ENCODE measurements at regions of chr6 and their contacts with region 1.

Region 1: DNA sequence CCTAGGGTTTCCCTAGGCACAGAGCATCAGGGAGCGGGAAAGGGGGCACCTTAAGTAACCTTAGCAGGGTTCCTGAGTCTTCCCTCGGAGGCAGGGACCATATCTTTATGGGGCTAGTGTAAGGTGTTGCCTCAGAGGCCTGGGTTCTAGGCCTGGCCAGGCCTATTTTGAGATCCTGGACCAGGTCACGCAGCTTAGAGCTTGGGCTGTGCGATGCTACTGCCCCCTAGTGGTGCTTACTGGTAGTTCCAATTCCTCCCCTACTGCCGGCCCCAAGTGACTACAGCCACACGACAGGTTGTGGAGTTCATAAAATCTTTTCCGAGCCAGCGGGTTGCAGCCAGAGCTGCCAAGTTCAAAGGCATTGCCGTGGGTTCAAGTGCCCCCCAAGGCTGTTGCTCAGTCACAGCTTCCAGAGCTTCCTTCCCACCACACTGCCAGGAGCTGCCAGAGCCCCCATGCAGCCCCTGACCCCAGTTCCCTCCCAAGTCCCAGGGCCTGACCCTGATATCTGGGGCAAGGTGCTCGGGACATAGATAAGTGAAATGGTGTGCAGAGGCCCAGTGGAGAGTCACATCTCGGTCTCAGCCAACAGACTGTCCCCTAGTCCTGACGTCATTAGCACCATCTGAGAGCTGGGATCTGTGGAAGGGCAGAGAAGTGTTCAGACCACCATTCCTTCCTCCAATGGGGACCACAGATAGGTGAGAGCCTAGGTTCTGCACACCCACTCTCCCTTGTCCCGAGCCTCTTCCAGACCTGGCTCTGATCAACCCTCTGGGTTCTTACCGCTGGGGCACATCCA is 3.3 kb downstream of the LRRC73 start:
- DNase-seq: peak; percentile 70 to 86
- H3K4me3 ChIP-seq: no peak overlapping the region
- H3K27ac ChIP-seq: no peak overlapping the region
- H3K4me1 ChIP-seq: peaks cover 0 to 31% (median 22%) of the 10 kb centered on the region in 4 donors
- H3K27me3 ChIP-seq: no peaks in the 10 kb centered on the region
- CTCF ChIP-seq: peak; percentile 91 to 96

Region 2: DNA sequence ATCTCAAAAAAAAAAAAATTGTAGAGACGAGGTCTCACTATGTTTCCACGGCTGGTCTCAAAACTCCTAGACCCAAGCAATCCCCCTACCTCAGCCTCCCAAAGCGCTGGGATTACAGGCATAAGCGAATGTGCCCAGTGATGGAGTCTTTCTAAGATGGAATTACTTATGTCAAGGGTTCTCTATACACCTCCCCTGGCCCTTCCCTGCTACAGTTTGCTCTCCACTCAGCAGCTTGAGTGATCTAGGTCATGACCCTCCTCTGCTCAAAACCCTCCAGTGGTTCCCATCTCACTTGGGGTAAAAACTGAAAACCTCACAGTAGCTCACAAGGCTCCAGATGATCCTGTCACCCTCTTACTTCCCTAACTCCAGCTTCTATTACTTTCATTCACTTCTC is 275.8 kb before region 1 on chr6:
- intact Hi-C with region 1: no loop called
- DNase-seq: no peak
- H3K4me3 ChIP-seq: no peak overlapping the region
- H3K27ac ChIP-seq: no peak overlapping the region
- H3K4me1 ChIP-seq: peaks cover 0 to 14% (median 7%) of the 10 kb centered on the region in 4 donors
- H3K27me3 ChIP-seq: peaks cover 0 to 15% of the 10 kb centered on the region in 2 donors
- CTCF ChIP-seq: no peak

Region 3: DNA sequence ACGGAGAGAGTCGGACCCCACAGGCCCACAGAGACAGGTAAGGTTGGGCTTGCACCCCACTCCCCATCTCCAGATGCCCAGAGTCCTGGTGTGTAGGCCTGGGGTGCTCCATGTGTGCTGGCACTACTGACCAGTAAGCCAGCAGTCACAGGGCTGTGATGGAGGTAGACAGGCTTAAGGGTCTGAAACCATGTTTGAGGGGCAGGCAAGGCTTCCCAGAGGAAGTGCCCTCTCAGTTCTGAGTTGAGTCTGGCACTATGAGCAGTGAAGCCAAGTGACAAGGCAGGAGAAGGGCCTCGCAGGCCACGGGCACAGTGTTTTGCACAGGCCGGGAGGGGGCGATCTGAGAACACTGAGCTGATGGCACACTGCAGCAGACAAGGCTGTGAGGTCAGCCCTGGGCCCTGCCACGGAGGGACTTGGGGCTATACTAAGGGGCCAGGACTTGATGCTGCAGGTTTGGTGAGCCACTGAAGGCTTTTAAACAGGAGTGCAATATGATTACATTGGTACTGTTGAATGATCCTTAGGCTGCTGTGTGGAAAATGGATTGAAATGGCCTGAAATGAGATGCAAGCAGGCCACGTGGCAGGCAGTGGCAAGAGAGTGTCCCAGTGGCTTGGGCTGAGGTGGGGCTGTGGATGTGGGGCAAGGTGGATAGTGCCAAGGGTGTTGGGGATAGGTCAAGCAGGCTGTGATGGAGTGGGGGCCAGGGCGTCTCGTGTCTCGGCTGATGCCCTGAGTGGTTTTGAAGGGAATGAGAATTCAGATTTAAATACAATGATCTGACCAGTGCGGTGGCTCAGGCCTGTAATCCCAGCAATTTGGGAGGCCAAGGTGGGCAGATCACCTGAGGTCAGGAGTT is 243.3 kb before region 1 on chr6:
- intact Hi-C with region 1: loop called (anchors 10 kb)
- DNase-seq: peak in 1 of 2 donors; percentile 60
- H3K4me3 ChIP-seq: no peak overlapping the region
- H3K27ac ChIP-seq: no peak overlapping the region
- H3K4me1 ChIP-seq: peaks cover 0 to 10% (median 9%) of the 10 kb centered on the region in 4 donors
- H3K27me3 ChIP-seq: peaks cover 0 to 8% of the 10 kb centered on the region in 2 donors
- CTCF ChIP-seq: peak; percentile 56 to 67

Region 4: GRCh38 chr6:43369174-43370022 is 137.5 kb before region 1 on chr6 and contains the start of gene ZNF318:
- intact Hi-C with region 1: loop called (anchors 10 kb)
- DNase-seq: peak; percentile 94 to 98
- H3K4me3 ChIP-seq: peak within 1 kb of the TSS; percentile 78 to 96
- H3K27ac ChIP-seq: peak within 1 kb of the TSS; percentile 83 to 88
- H3K4me1 ChIP-seq: peaks cover 0 to 26% (median 18%) of the 10 kb centered on the region in 4 donors
- H3K27me3 ChIP-seq: no peaks in the 10 kb centered on the region
- CTCF ChIP-seq: no peak

Region 5: DNA sequence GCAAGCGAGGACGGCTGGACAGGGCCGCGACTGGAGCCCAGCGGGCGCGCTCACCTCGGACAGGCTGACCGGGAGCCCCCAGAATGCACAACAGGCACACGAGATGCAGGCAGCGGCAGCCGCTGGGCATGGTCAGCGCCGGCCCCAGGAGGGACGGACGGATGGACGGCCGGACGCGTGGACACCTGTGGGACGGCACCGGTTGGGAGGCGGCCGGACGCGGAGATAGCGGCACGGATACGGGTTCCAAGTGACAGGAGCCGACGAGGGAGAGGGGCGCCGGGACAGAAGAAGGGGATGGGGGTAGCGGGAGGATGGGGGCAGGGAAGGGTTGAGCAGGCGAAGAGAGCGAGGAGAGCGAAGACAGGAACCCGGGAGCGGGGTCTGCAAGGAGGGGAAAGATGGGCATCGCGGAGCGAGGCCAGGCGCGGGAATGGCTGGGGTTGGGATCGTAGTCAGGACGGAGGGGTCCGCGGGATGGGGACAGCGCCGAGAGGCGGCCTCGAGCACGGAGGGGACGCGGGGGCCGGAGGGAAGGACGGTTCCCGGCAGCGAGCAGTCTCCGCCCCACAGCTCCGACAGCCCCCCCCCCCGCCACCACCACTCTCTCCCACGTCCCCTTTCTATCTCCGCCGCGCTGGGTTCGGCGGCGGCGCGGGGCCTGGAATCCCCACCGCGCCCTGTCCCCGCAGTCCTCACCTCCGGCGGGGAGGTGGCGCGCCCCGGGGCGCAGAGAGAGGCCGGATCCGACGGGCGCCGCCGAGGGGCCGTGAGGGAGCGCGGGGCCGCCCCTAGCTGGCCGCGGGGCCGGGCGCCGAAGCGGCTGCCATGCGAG is 52.0 kb before region 1 on chr6:
- intact Hi-C with region 1: loop called (anchors 2 kb)
- DNase-seq: peak; percentile 79 to 89
- H3K4me3 ChIP-seq: peak overlapping the region; percentile 40 to 49
- H3K27ac ChIP-seq: no peak overlapping the region
- H3K4me1 ChIP-seq: peaks cover 0 to 21% (median 14%) of the 10 kb centered on the region in 4 donors
- H3K27me3 ChIP-seq: peaks cover 0 to 40% of the 10 kb centered on the region in 2 donors
- CTCF ChIP-seq: no peak

Region 6: DNA sequence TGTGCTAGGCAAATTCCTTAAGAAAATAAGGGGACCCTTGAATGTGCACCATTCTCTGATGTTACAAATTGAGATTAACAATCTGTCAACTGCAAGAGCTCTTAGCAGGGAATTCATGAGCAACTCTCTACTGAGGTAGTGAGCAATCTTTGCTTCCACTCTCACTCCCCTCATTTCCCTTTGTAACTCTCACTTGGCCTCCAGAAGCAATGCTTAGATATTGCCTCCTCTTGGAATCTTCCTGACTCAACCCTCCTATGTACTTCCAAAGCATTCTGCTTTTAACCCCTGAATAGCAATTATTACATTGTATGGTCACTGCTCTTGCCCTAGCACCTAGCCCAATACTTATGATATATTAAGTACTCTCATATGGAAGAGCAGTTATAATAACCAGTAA is 52.5 kb after region 1 on chr6:
- intact Hi-C with region 1: no loop called
- DNase-seq: no peak
- H3K4me3 ChIP-seq: no peak overlapping the region
- H3K27ac ChIP-seq: no peak overlapping the region
- H3K4me1 ChIP-seq: no peaks in the 10 kb centered on the region
- H3K27me3 ChIP-seq: no peaks in the 10 kb centered on the region
- CTCF ChIP-seq: no peak

Region 7: DNA sequence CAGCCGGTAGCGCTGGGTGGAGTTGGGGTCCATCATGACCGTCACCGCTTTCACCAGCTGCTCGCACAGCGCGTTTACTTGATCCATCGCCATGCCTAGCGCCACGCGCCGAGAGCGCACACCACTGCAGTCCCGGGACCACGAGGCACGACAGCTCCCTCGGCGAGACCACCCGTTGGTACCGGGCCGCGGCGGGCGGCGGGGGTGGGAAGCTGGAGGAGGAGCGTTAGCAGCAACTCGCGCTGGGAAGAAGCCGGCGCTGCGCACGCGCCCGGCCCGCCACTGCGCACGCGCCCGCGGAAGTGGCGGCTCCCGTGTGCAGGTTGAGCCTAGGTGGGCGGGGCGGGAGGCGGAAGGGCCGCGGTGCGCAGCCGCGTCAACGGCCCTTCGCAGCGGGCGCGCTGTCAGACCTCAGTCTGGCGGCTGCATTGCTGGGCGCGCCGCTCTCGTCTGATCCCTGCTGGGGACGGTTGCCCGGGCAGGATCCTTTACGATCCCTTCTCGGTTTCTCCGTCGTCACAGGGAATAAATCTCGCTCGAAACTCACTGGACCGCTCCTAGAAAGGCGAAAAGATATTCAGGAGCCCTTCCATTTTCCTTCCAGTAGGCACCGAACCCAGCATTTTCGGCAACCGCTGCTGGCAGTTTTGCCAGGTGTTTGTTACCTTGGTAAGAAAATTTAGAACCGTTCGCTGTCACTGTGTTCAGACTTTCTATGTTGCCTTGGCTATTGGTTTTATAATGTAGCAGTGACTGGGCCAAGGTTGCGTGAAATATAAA is 69.1 kb after region 1 on chr6 and contains the starts of genes POLH and XPO5:
- intact Hi-C with region 1: loop called (anchors 5 kb)
- DNase-seq: peak; percentile 89 to 94
- H3K4me3 ChIP-seq: peak within 1 kb of the TSS; percentile 90 to 91
- H3K27ac ChIP-seq: peak within 1 kb of the TSS; percentile 79 to 81
- H3K4me1 ChIP-seq: peaks cover 0 to 28% (median 18%) of the 10 kb centered on the region in 4 donors
- H3K27me3 ChIP-seq: no peaks in the 10 kb centered on the region
- CTCF ChIP-seq: no peak

Measured in tibial artery (tissue), 4 donors.